ENCODE measurements at regions of chr1 and their contacts with region 1.

Region 1: GRCh38 chr1:43073490-43074230 is 98.4 kb downstream of the EBNA1BP2 start:
- DNase-seq: peak; percentile 47
- H3K4me3 ChIP-seq: no peak overlapping the region
- H3K27ac ChIP-seq: no peak overlapping the region
- H3K27me3 ChIP-seq: no peaks in the 10 kb centered on the region
- CTCF ChIP-seq: peak; percentile 84

Region 2: GRCh38 chr1:42786097-42786496 is 287.6 kb before region 1 on chr1:
- CTCF ChIA-PET with region 1: interaction called, 11 read pairs
- POLR2A ChIA-PET with region 1: no interaction called
- DNase-seq: no peak
- H3K4me3 ChIP-seq: no peak overlapping the region
- H3K27ac ChIP-seq: no peak overlapping the region
- H3K27me3 ChIP-seq: peaks cover 2% of the 10 kb centered on the region
- CTCF ChIP-seq: no peak

Region 3: GRCh38 chr1:42913426-42914091 is 160.1 kb before region 1 on chr1:
- CTCF ChIA-PET with region 1: interaction called, 709 read pairs
- POLR2A ChIA-PET with region 1: interaction called, 10 read pairs
- DNase-seq: peak; percentile 79
- H3K4me3 ChIP-seq: no peak overlapping the region
- H3K27ac ChIP-seq: no peak overlapping the region
- H3K27me3 ChIP-seq: peaks cover 7% of the 10 kb centered on the region
- CTCF ChIP-seq: peak; percentile 89

Region 4: DNA sequence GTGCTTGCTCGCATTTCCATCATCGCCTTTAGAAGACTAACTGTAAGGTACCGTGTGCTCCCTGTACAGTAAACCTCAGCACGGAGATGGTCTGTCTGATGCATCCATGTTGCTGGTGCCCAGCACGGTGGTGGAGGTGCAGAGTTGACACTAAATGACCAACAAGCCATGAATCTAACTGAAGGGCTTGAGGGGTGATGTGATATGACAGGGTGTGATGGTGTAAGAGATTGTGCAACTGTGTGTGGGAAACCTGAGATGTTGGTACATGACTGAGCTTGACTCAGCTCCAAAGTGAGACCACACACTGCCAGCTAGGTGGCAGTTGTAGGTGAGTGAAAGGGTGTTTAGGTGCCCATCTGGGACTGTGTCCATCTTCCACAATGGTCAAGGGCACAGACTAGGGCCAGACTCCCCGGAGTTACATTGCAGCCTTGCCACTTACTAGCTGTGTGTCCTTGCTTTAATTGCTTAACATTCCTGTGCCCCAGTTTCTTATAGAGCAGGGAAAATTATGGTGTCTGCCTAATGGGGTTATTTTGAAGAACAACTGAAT is 136.4 kb before region 1 on chr1:
- CTCF ChIA-PET with region 1: interaction called, 18 read pairs
- POLR2A ChIA-PET with region 1: no interaction called
- DNase-seq: no peak
- H3K4me3 ChIP-seq: no peak overlapping the region
- H3K27ac ChIP-seq: peak overlapping the region; percentile 71
- H3K27me3 ChIP-seq: no peaks in the 10 kb centered on the region
- CTCF ChIP-seq: no peak

Region 5: DNA sequence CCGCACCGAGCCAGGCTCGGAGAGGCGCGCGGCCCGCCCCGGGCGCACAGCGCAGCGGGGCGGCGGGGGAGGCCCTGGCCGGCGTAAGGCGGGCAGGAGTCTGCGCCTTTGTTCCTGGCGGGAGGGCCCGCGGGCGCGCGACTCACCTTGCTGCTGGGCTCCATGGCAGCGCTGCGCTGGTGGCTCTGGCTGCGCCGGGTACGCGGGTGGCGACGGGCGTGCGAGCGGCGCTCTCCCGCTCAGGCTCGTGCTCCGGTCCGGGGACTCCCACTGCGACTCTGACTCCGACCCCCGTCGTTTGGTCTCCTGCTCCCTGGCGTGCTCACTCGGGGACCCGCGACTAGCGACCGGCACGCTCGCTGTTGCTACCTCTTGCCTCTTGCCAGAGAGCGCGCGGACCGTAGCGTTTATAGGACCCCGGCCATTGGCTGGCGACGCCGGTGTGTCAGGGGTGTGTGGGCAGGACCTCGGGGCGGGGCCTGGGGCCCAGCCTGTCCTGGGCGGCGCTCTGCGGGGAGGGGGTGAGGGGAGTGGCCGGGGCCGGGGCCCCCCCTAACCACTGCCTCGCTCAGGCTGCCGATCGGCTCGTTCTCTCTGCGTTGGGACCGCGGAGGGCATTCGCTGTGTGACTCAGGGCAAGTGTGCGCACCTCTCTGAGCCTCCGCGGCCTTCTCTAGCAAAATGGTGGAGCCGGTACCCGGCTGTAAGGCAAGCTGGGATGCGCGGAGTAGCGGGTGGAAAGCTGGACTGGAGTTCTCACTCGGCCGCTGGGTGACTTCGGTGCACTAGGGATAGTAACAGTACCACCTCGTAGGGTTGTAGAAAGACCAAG is 115.0 kb before region 1 on chr1 and contains the start of gene SLC2A1:
- CTCF ChIA-PET with region 1: interaction called, 16 read pairs
- POLR2A ChIA-PET with region 1: interaction called, 4 read pairs
- DNase-seq: peak; percentile 86
- H3K4me3 ChIP-seq: peak within 1 kb of the TSS; percentile 83
- H3K27ac ChIP-seq: peak within 1 kb of the TSS; percentile 68
- H3K27me3 ChIP-seq: no peaks in the 10 kb centered on the region
- CTCF ChIP-seq: no peak
- polyA plus RNA-seq, gene SLC2A1: 114 and 140 TPM in 2 replicates

Region 6: GRCh38 chr1:43059640-43060574 is 13.8 kb before region 1 on chr1:
- CTCF ChIA-PET with region 1: interaction called, 19 read pairs
- POLR2A ChIA-PET with region 1: no interaction called
- DNase-seq: peak; percentile 29
- H3K4me3 ChIP-seq: no peak overlapping the region
- H3K27ac ChIP-seq: peak overlapping the region; percentile 73
- H3K27me3 ChIP-seq: peaks cover 5% of the 10 kb centered on the region
- CTCF ChIP-seq: no peak

Measured in AG04450 (cell line).